Caco-2 (cell line): ENCODE measurements at regions of chr1 and their contacts with region 1.

Region 1: GRCh38 chr1:25944986-25945385 is 38.8 kb upstream of the STMN1 start:
- DNase-seq: peak in 1 of 2 experiments; percentile 15
- H3K4me3 ChIP-seq: no peak overlapping the region
- H3K4me3 Mint-ChIP-seq: no peak overlapping the region
- H3K27ac Mint-ChIP-seq: no peak overlapping the region
- H3K4me1 ChIP-seq: peaks cover 4% of the 10 kb centered on the region; the same call in 1 of the 2 replicates
- H3K4me1 Mint-ChIP-seq: no peaks in the 10 kb centered on the region
- H3K27me3 ChIP-seq: no peaks in the 10 kb centered on the region
- H3K27me3 Mint-ChIP-seq: no peaks in the 10 kb centered on the region
- CTCF ChIP-seq: no peak

Region 2: DNA sequence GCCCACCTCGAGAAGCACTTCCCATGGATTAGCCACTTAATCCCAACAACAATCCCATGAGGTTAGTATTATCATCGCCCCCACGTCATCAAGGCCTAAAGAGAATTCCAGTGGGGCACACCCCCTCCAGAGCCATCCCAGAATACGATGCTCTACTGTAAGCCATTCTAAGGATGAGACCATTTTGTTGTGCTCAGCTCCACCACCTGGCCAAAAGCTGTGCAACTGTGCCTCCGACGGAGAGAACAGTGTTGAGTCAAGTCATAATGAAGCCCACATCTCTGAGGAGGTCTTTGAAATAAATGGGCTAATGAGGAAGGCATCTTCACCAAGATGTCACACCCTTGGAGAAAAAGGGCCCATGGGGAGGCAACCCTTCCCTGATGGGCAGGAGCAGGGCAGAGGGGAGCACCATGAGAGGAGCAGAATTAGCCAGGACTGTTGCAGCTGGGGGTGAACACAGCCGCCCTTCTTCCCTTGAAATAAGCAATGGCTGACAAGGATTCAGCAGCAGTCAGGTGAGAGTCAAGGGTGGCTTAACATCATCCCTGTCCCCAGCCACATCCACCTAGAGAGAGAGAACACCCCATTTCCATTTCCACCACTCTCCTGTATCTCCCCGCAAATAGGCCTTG is 727.3 kb before region 1 on chr1:
- CTCF ChIA-PET with region 1: no interaction called
- POLR2A ChIA-PET with region 1: no interaction called
- intact Hi-C with region 1: loop called (anchors 10 kb)
- DNase-seq: no peak
- H3K4me3 ChIP-seq: no peak overlapping the region
- H3K4me3 Mint-ChIP-seq: no peak overlapping the region
- H3K27ac Mint-ChIP-seq: no peak overlapping the region
- H3K4me1 ChIP-seq: peaks cover 23% of the 10 kb centered on the region
- H3K4me1 Mint-ChIP-seq: peaks cover 18% of the 10 kb centered on the region
- H3K27me3 ChIP-seq: no peaks in the 10 kb centered on the region
- H3K27me3 Mint-ChIP-seq: no peaks in the 10 kb centered on the region
- CTCF ChIP-seq: no peak